ENCODE measurements at regions of chr4 and their contacts with region 1.

Region 1: DNA sequence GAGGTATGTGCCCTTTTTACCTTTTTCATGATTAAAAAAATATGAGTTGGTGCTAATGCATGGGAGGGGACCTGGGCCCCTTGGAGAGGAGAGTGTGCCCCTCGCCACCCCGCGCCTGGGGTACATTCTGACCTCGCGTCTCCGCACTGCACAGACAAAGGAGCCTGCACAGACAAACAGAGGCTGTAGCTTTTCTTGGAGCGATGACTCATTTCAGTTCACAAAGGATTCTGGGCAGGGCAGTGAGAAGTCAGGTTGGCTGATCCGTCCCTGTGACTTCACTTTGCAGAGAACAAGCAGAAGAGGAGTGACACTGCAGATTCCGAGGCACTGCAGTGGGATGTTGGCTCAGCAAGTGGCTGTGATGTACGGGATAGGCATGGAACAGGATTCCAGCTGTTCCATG is 82.9 kb downstream of the STOX2 start:
- DNase-seq: peak; percentile 90

Region 2: GRCh38 chr4:183876268-183876934 is 111.6 kb before region 1 on chr4:
- intact Hi-C with region 1: loop called (anchors 2 kb)
- DNase-seq: peak; percentile 88